HEK293T (cell line): ENCODE measurements at regions of chr4 and their contacts with region 1.

Region 1: GRCh38 chr4:184733654-184734524 is at the start of gene CENPU:
- DNase-seq: peak; percentile 89

Region 2: DNA sequence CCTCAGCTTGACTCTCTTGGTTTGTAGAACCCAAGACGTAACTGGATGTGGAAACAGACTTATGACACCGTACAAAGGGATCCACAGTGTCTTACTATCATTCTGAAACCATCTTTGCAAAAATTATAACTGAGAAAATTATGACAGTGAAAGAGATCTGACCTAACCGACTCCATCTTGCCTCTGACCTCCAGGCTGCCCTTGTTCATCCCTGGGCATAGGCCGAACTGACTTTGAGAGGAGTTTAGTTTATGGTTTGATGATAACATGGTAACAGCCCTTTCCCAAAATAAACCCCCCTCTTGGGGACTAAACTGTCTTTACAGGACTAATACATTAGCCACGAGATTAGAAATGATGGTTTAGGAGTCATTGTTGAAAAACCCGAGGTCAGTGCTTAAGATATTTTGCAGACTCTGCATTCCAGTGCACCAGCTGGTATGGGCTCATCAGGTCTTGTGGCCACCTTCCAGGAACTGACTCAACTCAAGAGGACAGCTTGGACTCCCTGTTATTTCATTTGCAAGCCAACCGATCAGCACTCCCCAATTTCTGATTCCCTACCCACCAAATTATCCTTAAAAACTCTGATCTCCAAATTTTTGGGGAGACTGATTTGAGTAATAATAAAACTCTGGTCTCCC is 134.3 kb before region 1 on chr4:
- CTCF ChIA-PET with region 1: no interaction called
- POLR2A ChIA-PET with region 1: no interaction called
- DNase-seq: no peak

Region 3: DNA sequence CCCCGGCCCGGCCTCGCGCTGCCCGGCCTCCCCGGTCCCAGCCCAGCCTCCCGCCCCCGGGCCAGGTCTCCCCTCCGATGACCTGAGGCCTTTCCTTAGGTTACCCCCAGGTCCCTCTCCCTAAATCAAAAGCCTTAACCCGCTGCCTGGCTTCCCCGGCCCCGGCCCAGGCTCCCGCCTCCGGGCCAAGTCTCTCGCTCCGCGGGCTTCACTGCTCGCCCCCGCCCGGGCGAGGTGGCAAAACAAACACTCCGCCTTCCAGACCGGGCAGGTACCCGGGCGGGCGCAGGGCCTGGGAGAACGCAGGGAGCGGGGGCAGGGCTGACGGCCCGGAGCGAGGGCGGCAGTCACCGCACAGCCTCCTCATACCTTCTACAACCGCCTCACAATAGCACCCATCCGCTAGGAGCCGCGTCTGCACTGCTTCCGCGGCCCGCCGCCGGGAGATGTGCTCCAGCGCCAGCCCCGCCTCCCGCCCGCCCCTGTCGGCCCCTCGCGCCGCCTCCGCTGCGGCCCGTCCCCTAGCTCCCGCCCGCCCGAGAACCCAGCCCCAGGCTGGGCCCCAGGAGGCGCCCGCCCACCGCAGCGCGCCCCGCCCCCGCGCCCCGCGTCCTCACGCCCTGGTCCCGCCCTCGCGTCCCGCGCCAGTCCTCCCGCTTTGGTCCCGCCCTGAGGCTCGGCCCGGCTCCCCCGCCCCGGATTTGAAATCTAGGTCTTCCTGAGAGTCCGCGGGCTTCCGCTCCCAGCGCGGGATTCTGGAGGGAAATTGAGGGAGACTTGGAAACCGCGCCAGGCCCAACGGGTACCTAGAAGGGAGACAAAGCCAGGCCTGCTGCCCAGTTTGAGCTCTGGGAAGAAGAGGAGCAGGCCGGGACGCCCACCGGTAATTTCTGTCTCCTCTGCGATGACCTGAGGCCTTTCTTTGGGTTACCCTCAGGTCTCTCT is 84.6 kb before region 1 on chr4 and contains the starts of genes CASP3 and PRIMPOL:
- CTCF ChIA-PET with region 1: no interaction called
- POLR2A ChIA-PET with region 1: interaction called, 17 read pairs
- DNase-seq: peak; percentile 75

Region 4: DNA sequence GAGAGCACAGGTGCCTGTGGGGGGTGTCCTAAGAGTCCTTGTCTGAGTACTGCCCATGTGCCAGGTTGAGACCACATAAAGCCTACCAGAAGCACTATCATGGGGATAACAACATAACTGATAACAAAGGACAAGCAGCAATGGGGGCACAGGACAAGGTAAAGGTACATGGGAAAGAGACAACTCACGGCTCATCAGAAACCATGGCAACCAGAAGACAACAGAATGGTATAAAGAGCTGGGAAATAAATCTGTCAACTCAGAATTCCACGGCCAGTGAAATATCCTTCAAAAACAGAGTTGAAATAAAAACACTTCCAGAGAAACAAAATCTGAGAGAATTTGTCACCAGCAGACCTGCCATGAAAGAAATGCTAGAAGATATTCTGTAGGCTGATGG is 20.0 kb before region 1 on chr4:
- CTCF ChIA-PET with region 1: no interaction called
- POLR2A ChIA-PET with region 1: interaction called, 13 read pairs
- DNase-seq: no peak

Region 5: DNA sequence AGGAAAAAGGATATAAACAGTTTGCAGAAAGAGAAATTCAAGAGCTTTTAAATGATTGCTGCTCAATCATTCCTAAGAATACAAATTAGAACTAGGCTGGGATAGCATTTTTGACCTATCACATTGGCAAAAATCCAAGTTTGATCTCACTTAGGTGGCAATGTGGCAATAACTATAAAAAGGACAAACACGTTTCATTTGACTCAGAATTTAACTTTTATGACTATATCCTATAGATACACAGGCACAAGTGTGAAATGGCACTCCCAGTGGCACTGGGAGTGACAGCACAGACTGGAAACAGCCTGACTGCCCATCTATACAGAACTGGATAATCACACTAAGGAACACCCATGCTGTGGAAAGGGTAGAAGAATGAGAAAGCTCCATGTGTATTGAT is 11.1 kb before region 1 on chr4:
- CTCF ChIA-PET with region 1: no interaction called
- POLR2A ChIA-PET with region 1: interaction called, 43 read pairs
- DNase-seq: no peak

Region 6: GRCh38 chr4:184745831-184746795 is 12.2 kb after region 1 on chr4:
- CTCF ChIA-PET with region 1: interaction called, 8 read pairs
- POLR2A ChIA-PET with region 1: interaction called, 10 read pairs
- DNase-seq: peak; percentile 52

Region 7: GRCh38 chr4:184815046-184815877 is 81.4 kb after region 1 on chr4:
- CTCF ChIA-PET with region 1: interaction called, 4 read pairs
- POLR2A ChIA-PET with region 1: interaction called, 16 read pairs
- DNase-seq: peak; percentile 36